Right ventricle myocardium inferior (tissue), 1 donor: ENCODE measurements at regions of chr16 and their contacts with region 1.

Region 1: DNA sequence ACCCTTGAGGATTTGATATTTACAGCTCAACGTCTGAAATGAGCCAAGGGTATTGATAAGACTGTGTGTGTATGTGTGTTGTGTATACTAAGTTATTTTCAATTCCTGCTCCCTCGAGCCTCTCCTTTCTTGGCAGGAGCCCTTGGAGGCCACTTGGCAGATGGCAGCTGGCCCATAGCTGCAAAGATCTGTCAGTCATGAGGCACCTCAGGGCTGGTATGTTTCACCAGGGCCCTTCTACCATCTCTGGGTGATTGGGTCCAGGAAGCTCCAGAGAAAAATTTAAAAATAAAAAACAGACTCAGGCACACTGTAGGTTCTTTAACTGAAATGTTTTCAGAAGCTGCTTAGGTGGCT is 355.7 kb downstream of the HAPSTR1 start:
- DNase-seq: no peak
- ATAC-seq: peak; percentile 90

Region 2: DNA sequence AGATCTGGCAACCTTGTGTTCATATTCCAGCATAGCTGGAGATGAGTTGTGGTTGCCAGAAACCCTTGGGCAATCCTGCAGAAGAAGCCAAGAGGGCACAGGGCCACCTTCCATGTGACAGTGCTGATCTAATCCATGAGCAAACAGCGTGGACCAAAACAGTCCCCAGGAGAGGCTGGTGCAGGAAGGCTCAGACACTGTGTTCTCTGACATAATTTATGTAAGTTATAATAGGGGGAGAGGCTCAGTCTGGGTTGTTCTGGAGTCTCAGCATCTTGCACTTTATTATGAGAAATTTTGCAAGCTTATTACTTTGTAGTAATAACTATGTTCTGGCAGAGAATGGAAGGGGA is 81.8 kb before region 1 on chr16:
- intact Hi-C with region 1: loop called (anchors 1 kb)
- DNase-seq: peak; percentile 83
- ATAC-seq: peak; percentile 89

Region 3: DNA sequence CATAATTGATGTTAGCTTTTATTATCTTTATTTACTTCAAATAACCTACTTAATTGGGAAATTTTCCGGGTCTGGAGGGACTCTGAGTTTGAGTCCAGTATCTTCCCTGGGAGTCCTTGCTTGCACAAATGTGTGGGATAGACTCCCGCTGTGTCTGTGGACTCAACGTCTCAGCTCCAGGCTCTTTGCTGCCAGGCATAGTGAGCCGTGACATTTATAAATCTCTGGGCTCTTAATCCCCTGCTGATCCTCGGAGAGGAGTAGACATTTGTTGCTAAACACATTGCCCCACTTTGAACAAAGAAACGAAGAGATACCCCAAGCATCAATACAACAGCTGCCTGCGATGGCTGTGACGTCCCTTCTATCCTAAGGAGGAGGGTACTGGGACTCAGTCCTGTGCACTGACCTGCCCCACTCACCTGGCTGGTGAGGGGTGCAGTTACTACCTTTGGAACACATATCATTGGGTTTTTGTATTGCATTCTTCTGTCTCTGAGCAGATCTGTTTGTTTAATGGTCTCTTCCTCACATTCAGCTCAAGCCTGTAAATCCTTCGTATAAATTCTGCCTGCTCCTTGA is 38.8 kb before region 1 on chr16:
- intact Hi-C with region 1: no loop called
- DNase-seq: no peak
- ATAC-seq: no peak

Region 4: DNA sequence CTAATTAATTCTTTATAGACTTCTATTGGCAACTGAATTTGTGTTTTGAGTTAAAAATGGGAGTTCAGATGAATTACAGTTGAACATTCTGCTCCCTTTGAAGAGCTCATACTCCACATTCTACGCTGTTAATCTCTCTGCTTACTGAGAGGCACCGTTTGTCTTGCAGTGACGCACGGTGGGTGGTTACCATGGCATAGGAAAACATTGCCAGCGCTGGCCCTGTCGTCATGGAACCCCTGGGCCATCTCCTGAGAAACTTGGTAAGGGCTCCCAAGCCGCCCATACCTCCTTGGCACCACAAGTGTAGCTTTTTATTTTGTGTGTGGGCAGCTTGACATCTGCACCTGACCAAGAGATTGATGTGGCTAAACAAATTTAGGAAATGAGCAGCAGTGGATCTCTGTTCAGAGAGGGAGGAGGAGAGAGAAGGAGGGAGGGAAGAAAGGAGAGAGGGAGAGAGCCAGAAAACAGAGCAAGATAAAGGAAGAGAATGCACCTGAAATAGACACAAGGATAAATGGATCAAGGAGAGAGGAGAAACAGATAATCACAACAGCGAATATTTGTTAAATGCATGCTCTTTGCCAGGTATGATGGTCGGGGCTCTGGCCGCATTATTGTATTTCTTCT is 42.8 kb after region 1 on chr16:
- intact Hi-C with region 1: loop called (anchors 2 kb)
- DNase-seq: peak; percentile 74
- ATAC-seq: peak; percentile 91

Region 5: DNA sequence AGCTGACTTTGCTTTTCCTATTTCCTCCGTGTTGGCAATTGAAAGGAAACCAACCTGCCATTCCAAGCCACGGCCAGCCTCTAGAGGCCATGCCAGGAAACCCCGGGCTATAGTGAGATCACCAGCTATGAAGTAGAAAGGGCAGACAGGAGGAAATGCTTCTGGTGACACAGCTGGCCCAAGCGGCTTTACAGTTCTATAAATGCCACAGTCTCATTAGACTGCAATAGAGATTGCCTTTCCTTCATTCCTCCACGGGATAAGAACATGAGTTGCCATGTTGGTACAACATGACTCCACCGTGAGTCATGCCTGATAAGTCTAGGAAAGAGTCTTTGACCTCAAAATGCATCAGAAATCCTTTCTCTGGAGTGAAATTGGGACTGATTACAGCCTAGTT is 350.1 kb after region 1 on chr16:
- intact Hi-C with region 1: loop called (anchors 5 kb)
- DNase-seq: no peak
- ATAC-seq: peak; percentile 72